HepG2 (cell line): ENCODE measurements at regions of chr20 and their contacts with region 1.

Region 1: GRCh38 chr20:34363062-34363464 is at the start of gene ITCH:
- DNase-seq: peak; percentile 97
- ATAC-seq: peak; percentile 98
- H3K4me3 ChIP-seq: peak within 1 kb of the TSS; percentile 89 to 100 (median 95)
- H3K27ac ChIP-seq: peak within 1 kb of the TSS; percentile 78
- H3K4me1 ChIP-seq: peaks cover 58% of the 10 kb centered on the region
- H3K27me3 ChIP-seq: no peaks in the 10 kb centered on the region; a peak in 1 of 5 replicates
- CTCF ChIP-seq: no peak
- EP300 ChIP-seq: no peak
- POLR2A ChIP-seq: peak; percentile 86 to 88
- RAD21 ChIP-seq: peak; percentile 15; the same call in 1 of the 2 replicates
- total RNA-seq, gene ITCH: 112 and 162 TPM in 2 replicates

Region 2: DNA sequence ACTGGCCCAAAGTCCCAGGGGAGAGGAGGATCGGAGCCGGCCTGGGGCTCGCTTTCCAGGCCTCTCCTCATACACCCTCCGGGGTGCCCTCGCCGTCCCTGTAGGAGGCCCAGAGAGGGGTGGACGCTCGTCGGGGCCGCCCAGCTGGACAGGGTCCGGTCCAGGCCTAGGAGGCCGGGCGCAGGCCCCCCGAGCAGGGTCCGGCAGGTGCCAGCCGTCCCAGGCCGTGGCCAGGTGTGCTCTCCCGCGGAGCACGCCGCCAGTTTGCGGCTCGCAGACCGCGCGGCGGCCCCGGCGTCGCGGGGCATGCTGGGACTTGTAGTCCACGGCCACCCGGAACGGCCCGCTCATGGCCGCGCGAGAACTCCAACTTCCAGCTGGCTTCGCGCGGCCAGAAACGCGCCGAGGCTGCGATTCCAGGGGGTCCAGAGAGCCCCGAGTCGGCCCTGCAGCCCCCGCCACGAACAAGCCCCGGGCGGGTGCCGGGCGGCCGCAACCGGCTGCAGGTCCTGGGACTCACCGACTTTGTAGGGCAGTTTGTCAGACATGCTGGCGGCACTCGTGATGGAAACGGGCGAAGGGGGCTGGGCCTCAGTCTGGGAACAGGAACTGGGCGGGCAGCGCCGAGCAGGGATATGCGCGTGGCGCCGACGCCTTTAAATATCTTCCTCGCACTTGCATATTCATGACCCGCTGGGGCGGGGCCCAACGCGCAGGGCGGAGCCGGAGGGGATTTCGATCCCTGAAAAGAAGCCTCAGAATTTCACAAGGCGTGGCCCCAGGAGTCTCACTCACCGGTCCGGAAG is 60.1 kb before region 1 on chr20 and contains the start of gene AHCY:
- CTCF ChIA-PET with region 1: no interaction called
- POLR2A ChIA-PET with region 1: interaction called, 12 read pairs
- in situ Hi-C with region 1: no loop called
- intact Hi-C with region 1: no loop called
- DNase-seq: peak; percentile 97
- ATAC-seq: peak; percentile 90
- H3K4me3 ChIP-seq: peak within 1 kb of the TSS; percentile 80 to 92 (median 90)
- H3K27ac ChIP-seq: peak within 1 kb of the TSS; percentile 83
- H3K4me1 ChIP-seq: peaks cover 71% of the 10 kb centered on the region
- H3K27me3 ChIP-seq: no peaks in the 10 kb centered on the region; a peak in 1 of 5 replicates
- CTCF ChIP-seq: no peak
- EP300 ChIP-seq: no peak; a peak in 1 of 4 replicates
- POLR2A ChIP-seq: peak; percentile 95 to 96
- RAD21 ChIP-seq: peak; percentile 67
- total RNA-seq, gene AHCY: 407 and 447 TPM in 2 replicates

Region 3: DNA sequence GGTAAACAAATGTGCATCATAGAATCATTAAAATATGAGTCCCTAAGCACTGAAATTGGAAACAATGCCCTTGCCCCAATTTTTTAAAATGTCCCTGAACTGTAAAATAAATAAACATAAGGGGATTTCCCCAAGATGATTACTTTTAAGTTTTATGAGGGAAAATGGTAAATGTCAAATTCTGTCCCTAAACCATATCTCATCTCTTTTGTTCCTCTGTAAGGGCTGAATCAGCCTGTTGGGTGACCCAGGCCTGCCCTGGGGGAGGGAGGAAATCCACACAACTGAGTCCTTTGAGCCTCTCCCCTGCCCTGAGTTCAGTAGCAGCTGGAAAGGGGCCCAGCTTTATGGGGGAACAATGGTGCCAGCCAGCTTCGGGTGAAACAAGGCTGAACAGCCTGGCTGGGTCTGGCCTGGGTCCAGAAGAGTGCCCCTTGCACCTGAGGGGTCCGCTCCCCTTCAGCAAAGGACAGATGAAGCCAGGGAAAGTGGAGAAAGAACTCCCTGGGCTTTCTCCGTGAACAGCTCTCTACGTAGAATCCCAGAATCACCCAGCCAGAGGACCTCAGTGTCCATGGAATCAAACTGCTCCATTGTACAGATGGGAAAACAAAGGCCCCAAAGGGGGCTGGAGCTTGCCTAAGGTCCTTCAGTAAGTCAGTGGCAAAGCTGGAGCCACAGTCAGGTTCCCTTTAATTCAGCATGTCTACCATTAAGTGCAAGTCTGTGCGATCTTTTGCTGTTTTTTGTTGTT is 28.2 kb before region 1 on chr20:
- CTCF ChIA-PET with region 1: no interaction called
- POLR2A ChIA-PET with region 1: interaction called, 89 read pairs
- in situ Hi-C with region 1: no loop called
- intact Hi-C with region 1: no loop called
- DNase-seq: peak; percentile 83
- ATAC-seq: peak; percentile 50
- H3K4me3 ChIP-seq: peak overlapping the region in 2 of 3 experiments; percentile 3 to 53; a peak in 2 of 6 replicates
- H3K27ac ChIP-seq: peak overlapping the region; percentile 59
- H3K4me1 ChIP-seq: peaks cover 70% of the 10 kb centered on the region
- H3K27me3 ChIP-seq: no peaks in the 10 kb centered on the region
- CTCF ChIP-seq: no peak; the same call in 1 of the 2 replicates
- EP300 ChIP-seq: peak in 1 of 2 experiments; percentile 54; a peak in 2 of 4 replicates
- POLR2A ChIP-seq: no peak
- RAD21 ChIP-seq: no peak

Region 4: DNA sequence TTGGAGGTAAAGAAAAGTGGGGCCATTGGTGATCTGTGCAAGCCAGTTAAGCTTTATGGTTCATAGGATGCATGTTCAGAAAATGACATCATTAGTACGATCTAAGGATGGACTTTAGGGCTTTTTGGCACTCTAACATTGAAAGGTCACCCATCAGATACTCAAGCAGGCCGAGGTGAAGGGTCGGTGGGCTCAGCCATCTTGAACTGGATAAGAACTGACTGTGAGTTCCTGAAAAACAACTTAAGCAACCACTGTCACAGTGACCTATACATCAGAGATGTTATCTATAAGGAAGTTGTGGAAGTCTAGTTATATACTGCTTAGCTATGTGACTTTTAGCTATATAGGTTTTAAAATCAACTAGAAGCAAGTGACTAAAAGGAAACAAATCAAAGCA is 13.0 kb before region 1 on chr20:
- CTCF ChIA-PET with region 1: no interaction called
- POLR2A ChIA-PET with region 1: interaction called, 46 read pairs
- in situ Hi-C with region 1: no loop called
- intact Hi-C with region 1: loop called (anchors 2 kb)
- DNase-seq: no peak
- ATAC-seq: no peak
- H3K4me3 ChIP-seq: no peak overlapping the region
- H3K27ac ChIP-seq: no peak overlapping the region
- H3K4me1 ChIP-seq: peaks cover 60% of the 10 kb centered on the region
- H3K27me3 ChIP-seq: peaks cover 0 to 1% of the 10 kb centered on the region in 2 experiments; a peak in 1 of 5 replicates
- CTCF ChIP-seq: no peak
- EP300 ChIP-seq: no peak
- POLR2A ChIP-seq: no peak
- RAD21 ChIP-seq: no peak

Region 5: DNA sequence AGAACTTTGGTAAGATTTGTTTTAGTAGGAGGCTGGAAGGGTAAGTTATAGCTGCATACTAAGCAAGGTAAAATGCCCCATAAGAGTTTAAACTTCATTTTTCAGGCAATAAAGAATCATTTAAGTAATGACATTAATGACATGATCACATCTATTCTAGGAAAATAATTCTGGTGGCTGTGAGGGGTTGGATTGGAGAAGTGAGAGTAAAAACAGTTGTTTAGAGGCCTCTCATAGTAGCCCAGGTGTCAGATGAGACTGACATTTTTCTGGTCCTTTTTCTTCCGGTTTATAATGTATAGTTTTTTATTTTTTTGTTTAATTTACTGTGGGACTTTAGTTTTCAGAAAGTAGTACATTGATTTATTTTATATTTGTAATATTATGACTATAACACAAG is 40.8 kb after region 1 on chr20:
- CTCF ChIA-PET with region 1: no interaction called
- POLR2A ChIA-PET with region 1: interaction called, 29 read pairs
- in situ Hi-C with region 1: no loop called
- intact Hi-C with region 1: loop called (anchors 5 kb)
- DNase-seq: no peak
- ATAC-seq: no peak
- H3K4me3 ChIP-seq: no peak overlapping the region
- H3K27ac ChIP-seq: peak overlapping the region; percentile 54
- H3K4me1 ChIP-seq: peaks cover 95% of the 10 kb centered on the region
- H3K27me3 ChIP-seq: no peaks in the 10 kb centered on the region
- CTCF ChIP-seq: no peak
- EP300 ChIP-seq: no peak
- POLR2A ChIP-seq: no peak
- RAD21 ChIP-seq: no peak